ENCODE measurements at regions of chr7 and their contacts with region 1.

Region 1: GRCh38 chr7:93902777-93903423 is 3.5 kb upstream of the GNGT1 start:
- DNase-seq: no peak
- ATAC-seq: peak; percentile 27
- H3K4me3 ChIP-seq: no peak overlapping the region
- H3K4me1 ChIP-seq: no peaks in the 10 kb centered on the region
- CTCF ChIP-seq: peak; percentile 17

Region 2: GRCh38 chr7:93097388-93097787 is 805.5 kb before region 1 on chr7:
- intact Hi-C with region 1: no loop called
- DNase-seq: no peak
- ATAC-seq: no peak
- H3K4me3 ChIP-seq: no peak overlapping the region
- H3K4me1 ChIP-seq: no peaks in the 10 kb centered on the region
- CTCF ChIP-seq: no peak

Region 3: GRCh38 chr7:93836116-93836515 is 66.8 kb before region 1 on chr7:
- intact Hi-C with region 1: no loop called
- DNase-seq: no peak
- ATAC-seq: no peak
- H3K4me3 ChIP-seq: no peak overlapping the region
- H3K4me1 ChIP-seq: no peaks in the 10 kb centered on the region
- CTCF ChIP-seq: no peak

Region 4: DNA sequence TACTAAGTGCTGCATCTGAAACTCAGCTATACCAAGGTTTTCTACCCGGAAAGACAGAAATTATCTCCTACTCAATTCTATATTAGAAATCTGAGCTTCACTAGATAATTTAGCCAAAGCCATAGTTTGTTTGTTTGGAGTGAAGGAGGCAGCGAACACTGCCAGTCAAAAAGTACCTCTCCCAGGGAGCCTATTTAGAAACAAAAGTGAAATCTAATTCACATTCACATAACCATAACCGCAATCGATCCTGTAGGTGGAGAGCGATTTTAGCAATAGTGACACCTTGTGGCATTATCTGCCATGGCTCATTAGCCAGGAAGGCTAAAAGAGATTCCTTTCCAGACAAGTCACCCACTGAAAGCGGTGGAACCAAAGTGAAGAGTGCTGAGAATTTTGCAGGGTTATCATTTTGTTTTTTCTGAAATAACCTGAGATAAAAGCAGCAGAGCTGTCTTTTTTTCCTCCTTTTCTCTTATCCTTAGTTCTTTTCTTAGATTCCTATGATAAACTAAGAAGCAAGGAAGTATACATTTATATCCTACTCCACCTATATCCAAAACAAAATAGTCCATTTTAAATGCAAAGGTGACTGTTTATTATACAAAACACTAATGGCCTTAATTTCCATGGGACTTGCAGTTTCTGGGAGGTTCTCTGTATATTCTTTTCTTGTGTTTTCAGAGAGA is 184.9 kb after region 1 on chr7:
- intact Hi-C with region 1: loop called (anchors 2 to 10 kb)
- DNase-seq: peak in 1 of 3 donors; percentile 73
- ATAC-seq: peak; percentile 80
- H3K4me3 ChIP-seq: no peak overlapping the region
- H3K4me1 ChIP-seq: no peaks in the 10 kb centered on the region
- CTCF ChIP-seq: peak; percentile 71

Measured in mucosa of descending colon (tissue), 3 donors.